Activated CD8-positive, alpha-beta memory T cell treated with anti-CD3 and anti-CD28 coated beads, Interleukin-2, amount 10 ng/mL, durations not matched to agents 7 days and 5 days (primary cell): ENCODE measurements at regions of chr7 and their contacts with region 1.

Region 1: GRCh38 chr7:36670585-36671431 is 53.5 kb downstream of the AOAH start:
- DNase-seq: peak; percentile 82
- ATAC-seq: peak; percentile 88
- H3K4me3 Mint-ChIP-seq: no peak overlapping the region
- H3K27ac Mint-ChIP-seq: peak overlapping the region; percentile 65
- H3K4me1 Mint-ChIP-seq: peaks cover 43% of the 10 kb centered on the region
- H3K27me3 Mint-ChIP-seq: no peaks in the 10 kb centered on the region

Region 2: GRCh38 chr7:36227223-36227622 is 443.6 kb before region 1 on chr7:
- CTCF ChIA-PET with region 1: no interaction called
- DNase-seq: no peak
- ATAC-seq: no peak
- H3K4me3 Mint-ChIP-seq: no peak overlapping the region
- H3K27ac Mint-ChIP-seq: no peak overlapping the region
- H3K4me1 Mint-ChIP-seq: no peaks in the 10 kb centered on the region
- H3K27me3 Mint-ChIP-seq: peaks cover 12% of the 10 kb centered on the region

Region 3: DNA sequence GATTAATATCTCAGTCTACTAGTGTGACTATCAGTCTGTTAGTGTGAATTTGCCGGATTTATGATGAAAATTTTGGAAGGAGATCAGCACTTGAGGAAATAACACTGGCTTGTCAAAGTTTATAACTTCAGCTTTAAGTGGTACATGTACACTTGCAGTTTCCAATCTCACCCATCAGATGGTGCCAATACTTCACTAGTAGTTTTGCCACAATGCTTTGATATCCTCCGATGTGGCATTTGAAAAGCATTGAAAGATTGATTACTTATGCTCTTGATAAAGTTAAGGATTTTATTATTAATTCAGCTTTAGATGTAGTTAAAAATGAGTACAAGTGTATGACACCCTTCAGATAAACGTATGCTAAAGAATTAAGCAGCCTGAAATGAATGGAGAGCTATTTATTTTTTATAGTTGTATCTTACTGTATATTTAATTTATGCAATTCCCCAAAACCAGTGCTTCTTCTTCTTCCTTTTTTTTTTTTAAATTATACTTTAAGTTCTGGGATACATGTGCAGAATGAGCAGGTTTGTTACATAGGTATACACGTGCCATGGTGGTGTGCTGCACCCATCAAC is 183.0 kb before region 1 on chr7:
- CTCF ChIA-PET with region 1: interaction called, 61 read pairs
- DNase-seq: peak; percentile 57
- ATAC-seq: peak; percentile 70
- H3K4me3 Mint-ChIP-seq: no peak overlapping the region
- H3K27ac Mint-ChIP-seq: no peak overlapping the region
- H3K4me1 Mint-ChIP-seq: peaks cover 2% of the 10 kb centered on the region
- H3K27me3 Mint-ChIP-seq: peaks cover 3% of the 10 kb centered on the region

Region 4: DNA sequence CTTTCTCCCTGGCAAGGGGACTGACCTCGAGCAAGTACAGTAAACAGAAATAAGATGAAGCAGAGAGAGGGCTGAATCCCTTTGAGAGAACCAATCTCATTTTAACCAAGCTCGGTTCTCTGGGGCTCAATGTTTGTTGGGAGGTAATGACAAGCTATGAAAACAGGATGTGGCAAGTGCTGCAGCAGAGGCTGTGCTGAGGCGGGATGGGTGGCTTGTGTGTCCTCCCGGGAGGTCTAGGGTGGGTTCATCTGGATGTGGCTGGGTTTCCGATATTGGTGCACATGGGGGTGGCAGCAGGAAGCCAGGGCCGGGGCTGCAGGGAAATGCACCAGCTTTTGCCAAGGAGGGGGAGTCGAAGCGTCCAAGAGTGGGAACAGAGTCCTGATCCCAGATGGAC is 31.0 kb before region 1 on chr7:
- CTCF ChIA-PET with region 1: interaction called, 32 read pairs
- DNase-seq: peak; percentile 91
- ATAC-seq: peak; percentile 98
- H3K4me3 Mint-ChIP-seq: peak overlapping the region; percentile 14
- H3K27ac Mint-ChIP-seq: peak overlapping the region; percentile 94
- H3K4me1 Mint-ChIP-seq: peaks cover 52% of the 10 kb centered on the region
- H3K27me3 Mint-ChIP-seq: no peaks in the 10 kb centered on the region

Region 5: DNA sequence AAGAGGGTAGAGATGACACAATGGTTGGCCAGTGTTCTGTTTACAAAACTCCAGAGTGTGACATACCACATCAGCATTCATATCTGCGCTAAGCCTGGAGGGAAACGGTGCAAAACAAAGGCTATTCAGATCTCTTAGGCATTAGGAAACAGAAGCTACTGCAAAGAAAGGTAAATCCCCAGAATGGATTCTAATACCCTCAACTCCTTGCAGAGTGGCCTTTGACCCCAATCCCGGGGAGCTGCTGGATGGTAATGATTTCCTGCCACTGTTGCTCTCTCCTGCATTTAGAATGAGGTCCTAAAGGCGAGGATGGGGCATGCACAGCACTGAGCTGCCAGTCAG is 11.7 kb before region 1 on chr7:
- CTCF ChIA-PET with region 1: interaction called, 19 read pairs
- DNase-seq: no peak
- ATAC-seq: no peak
- H3K4me3 Mint-ChIP-seq: no peak overlapping the region
- H3K27ac Mint-ChIP-seq: no peak overlapping the region
- H3K4me1 Mint-ChIP-seq: peaks cover 17% of the 10 kb centered on the region
- H3K27me3 Mint-ChIP-seq: no peaks in the 10 kb centered on the region

Region 6: DNA sequence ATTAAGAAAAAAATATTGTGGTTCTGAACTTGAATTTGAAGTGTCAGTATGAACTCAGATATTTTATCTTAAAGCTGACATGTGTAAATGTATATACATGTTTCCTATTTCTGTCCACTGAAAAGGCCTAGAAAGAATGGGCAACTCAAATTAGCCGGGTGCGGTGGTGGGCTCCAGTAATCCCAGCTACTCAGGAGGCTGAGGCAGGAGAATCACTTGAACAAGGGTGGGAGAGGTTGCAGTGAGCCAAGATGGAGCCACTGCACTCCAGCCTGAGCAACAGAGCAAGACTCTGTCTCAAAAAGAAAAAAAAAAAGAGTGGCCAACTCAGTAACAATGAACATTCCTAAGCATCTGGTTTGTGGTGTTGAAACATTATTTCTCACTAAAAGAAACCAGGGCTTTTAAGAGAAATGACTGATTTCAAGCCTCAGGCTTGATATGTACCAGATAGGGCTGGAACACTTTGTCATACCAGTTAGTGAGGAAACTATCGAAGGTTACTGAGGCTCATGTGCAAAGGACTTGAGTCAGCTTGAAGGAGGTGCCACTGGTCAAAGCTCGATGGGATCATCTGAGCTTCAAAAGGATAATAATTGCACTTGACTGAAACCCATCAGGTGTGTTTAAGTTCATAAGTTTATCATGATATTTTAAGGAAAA is 13.0 kb after region 1 on chr7:
- CTCF ChIA-PET with region 1: interaction called, 36 read pairs
- DNase-seq: peak; percentile 52
- ATAC-seq: peak; percentile 81
- H3K4me3 Mint-ChIP-seq: no peak overlapping the region
- H3K27ac Mint-ChIP-seq: peak overlapping the region; percentile 88
- H3K4me1 Mint-ChIP-seq: peaks cover 70% of the 10 kb centered on the region
- H3K27me3 Mint-ChIP-seq: no peaks in the 10 kb centered on the region

Region 7: DNA sequence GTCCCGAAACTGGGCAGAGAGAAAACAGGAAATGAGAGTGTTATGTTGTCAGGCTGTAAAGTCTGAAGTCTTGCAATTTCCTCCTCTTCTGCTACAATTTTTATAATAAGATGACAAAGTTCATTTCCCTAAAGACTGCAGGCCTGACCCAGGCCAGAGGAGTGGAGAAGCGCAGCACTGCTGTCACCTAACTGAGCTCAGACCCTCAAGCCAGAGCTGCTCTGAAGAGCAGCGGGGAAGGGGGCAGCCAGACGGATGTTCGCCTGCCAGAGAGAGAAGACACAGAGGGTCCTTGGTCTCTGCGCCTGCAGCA is 66.0 kb after region 1 on chr7:
- CTCF ChIA-PET with region 1: no interaction called
- DNase-seq: no peak
- ATAC-seq: peak; percentile 62
- H3K4me3 Mint-ChIP-seq: peak overlapping the region; percentile 32
- H3K27ac Mint-ChIP-seq: peak overlapping the region; percentile 88
- H3K4me1 Mint-ChIP-seq: peaks cover 48% of the 10 kb centered on the region
- H3K27me3 Mint-ChIP-seq: no peaks in the 10 kb centered on the region

Region 8: DNA sequence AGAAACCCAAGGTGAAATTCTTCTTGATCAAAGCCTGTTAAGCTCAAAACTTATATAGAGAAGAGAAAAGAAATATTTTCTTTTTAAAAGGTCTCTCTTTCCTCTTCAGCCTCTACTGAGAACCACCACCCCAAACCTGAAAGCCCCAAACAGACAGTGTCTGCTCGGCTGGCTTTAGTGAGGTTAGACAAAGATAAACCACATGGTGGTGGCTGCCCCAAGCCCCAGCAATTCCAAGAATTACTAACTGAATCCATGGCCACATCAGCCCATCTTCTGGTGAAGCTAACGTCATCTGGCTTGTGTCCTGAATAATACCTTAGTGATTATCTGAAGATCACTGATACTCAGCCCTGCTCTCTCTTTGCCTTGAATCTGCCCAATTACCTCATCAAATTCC is 502.9 kb after region 1 on chr7:
- CTCF ChIA-PET with region 1: interaction called, 16 read pairs
- DNase-seq: peak; percentile 52
- ATAC-seq: peak; percentile 55
- H3K4me3 Mint-ChIP-seq: no peak overlapping the region
- H3K27ac Mint-ChIP-seq: peak overlapping the region; percentile 31
- H3K4me1 Mint-ChIP-seq: peaks cover 44% of the 10 kb centered on the region
- H3K27me3 Mint-ChIP-seq: no peaks in the 10 kb centered on the region